Activated CD4-positive, alpha-beta memory T cell treated with anti-CD3 and anti-CD28 coated beads, Interleukin-2, amount 10 ng/mL, durations not matched to agents 7 days and 5 days (primary cell): ENCODE measurements at regions of chr19 and their contacts with region 1.

Region 1: GRCh38 chr19:44500148-44500956 is at the start of gene ZNF180:
- DNase-seq: peak; percentile 94
- H3K4me3 Mint-ChIP-seq: peak within 1 kb of the TSS; percentile 97
- H3K27ac Mint-ChIP-seq: peak within 1 kb of the TSS; percentile 86
- H3K4me1 Mint-ChIP-seq: peaks cover 35% of the 10 kb centered on the region
- H3K27me3 Mint-ChIP-seq: no peaks in the 10 kb centered on the region
- total RNA-seq, gene ZNF180: 9.7 to 11.0 TPM

Region 2: GRCh38 chr19:44164673-44165512 is 335.5 kb before region 1 on chr19 and contains the start of gene ZNF226:
- CTCF ChIA-PET with region 1: no interaction called
- POLR2A ChIA-PET with region 1: interaction called, 11 read pairs
- DNase-seq: peak; percentile 82
- H3K4me3 Mint-ChIP-seq: peak within 1 kb of the TSS; percentile 94
- H3K27ac Mint-ChIP-seq: peak within 1 kb of the TSS; percentile 87
- H3K4me1 Mint-ChIP-seq: peaks cover 34% of the 10 kb centered on the region
- H3K27me3 Mint-ChIP-seq: no peaks in the 10 kb centered on the region
- total RNA-seq, gene ZNF226: 17.4 to 18.0 TPM

Region 3: GRCh38 chr19:44207126-44207803 is 293.1 kb before region 1 on chr19:
- CTCF ChIA-PET with region 1: no interaction called
- POLR2A ChIA-PET with region 1: interaction called, 14 read pairs
- DNase-seq: peak; percentile 77
- H3K4me3 Mint-ChIP-seq: peak overlapping the region; percentile 85
- H3K27ac Mint-ChIP-seq: peak overlapping the region; percentile 73
- H3K4me1 Mint-ChIP-seq: peaks cover 11% of the 10 kb centered on the region
- H3K27me3 Mint-ChIP-seq: no peaks in the 10 kb centered on the region

Region 4: DNA sequence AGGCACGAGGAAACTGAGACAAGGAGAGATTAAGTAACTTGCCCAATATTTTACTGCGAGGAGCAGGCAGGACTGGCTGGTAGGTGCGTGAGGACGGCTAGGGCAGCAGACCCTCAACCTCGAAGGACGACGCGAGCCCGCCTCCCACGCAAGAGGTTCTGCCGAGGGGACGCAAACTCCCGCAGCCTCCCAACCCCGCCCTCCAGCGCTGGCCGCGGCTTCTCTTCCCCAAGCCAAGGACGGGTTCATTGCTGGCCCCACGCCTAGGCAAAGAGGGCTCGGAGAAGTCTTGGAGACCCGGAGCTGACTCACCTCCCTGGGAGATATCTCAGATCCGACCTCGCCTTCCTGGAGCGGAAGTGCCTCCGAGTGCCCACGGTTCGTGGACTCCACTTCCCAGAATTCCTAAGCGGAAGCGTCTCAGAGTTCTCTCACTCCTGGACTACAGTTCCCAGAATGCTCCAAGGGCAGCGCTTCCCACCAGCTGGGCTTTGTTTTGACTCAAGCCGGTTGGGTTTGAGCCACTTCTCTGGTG is 195.6 kb before region 1 on chr19 and contains the start of gene ZNF235:
- CTCF ChIA-PET with region 1: no interaction called
- POLR2A ChIA-PET with region 1: interaction called, 10 read pairs
- DNase-seq: peak; percentile 76
- H3K4me3 Mint-ChIP-seq: peak within 1 kb of the TSS; percentile 85
- H3K27ac Mint-ChIP-seq: peak within 1 kb of the TSS; percentile 54
- H3K4me1 Mint-ChIP-seq: peaks cover 18% of the 10 kb centered on the region
- H3K27me3 Mint-ChIP-seq: no peaks in the 10 kb centered on the region
- total RNA-seq, gene ZNF235: 5.2 to 5.9 TPM

Region 5: DNA sequence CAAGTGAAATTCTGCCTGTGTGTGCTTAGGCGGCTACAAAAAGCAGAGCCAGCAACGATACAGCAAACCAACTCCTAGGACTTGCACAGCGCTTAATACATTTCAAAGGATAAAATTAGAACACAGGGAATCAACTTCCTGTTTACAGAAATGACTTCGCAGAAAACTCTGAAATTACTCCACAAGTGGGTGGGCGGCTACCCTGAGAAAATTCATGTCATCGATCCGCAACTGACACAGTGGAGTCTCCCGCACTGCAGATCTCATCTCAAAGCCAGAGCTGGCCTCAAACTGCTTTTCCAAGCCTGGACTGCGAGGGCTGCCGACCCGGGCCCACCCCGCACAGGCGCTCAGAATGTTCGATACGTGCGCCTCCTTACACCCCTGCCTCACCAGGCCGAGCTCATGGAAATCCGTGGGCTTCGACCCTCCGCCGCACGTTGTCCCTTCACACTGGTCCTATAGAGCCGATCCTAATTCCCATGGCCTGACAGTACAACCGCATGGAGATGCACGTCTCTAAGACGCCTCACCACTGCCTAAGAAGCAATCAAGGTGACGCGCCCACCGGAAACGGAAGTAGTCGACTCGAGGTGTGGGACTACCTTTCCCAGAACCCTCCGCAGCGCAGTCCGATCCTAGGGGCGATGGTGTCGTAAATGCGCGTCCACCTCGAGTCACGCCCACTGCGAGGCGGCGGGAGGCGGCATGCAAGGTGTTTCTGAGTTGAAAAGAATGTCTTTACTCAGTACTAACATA is 52.3 kb before region 1 on chr19 and contains the start of gene ZNF229:
- CTCF ChIA-PET with region 1: no interaction called
- POLR2A ChIA-PET with region 1: no interaction called
- DNase-seq: peak; percentile 50
- H3K4me3 Mint-ChIP-seq: peak within 1 kb of the TSS; percentile 37
- H3K27ac Mint-ChIP-seq: no peak within 1 kb of the TSS
- H3K4me1 Mint-ChIP-seq: peaks cover 5% of the 10 kb centered on the region
- H3K27me3 Mint-ChIP-seq: no peaks in the 10 kb centered on the region
- total RNA-seq, gene ZNF229: 0.05 to 0.55 TPM

Region 6: GRCh38 chr19:44566984-44567383 is 66.6 kb after region 1 on chr19:
- CTCF ChIA-PET with region 1: no interaction called
- POLR2A ChIA-PET with region 1: no interaction called
- DNase-seq: no peak
- H3K4me3 Mint-ChIP-seq: no peak overlapping the region
- H3K27ac Mint-ChIP-seq: no peak overlapping the region
- H3K4me1 Mint-ChIP-seq: no peaks in the 10 kb centered on the region
- H3K27me3 Mint-ChIP-seq: peaks cover 2% of the 10 kb centered on the region